Activated CD8-positive, alpha-beta T cell treated with anti-CD3 and anti-CD28 coated beads, Interleukin-2, amount 10 ng/mL, durations not matched to agents 7 days and 5 days (primary cell): ENCODE measurements at regions of chr3 and their contacts with region 1.

Region 1: GRCh38 chr3:18389108-18389733 is 35.9 kb downstream of the SATB1 start:
- DNase-seq: peak; percentile 39
- ATAC-seq: peak; percentile 21
- H3K4me3 Mint-ChIP-seq: no peak overlapping the region
- H3K27ac Mint-ChIP-seq: no peak overlapping the region
- H3K4me1 Mint-ChIP-seq: peaks cover 77% of the 10 kb centered on the region
- H3K27me3 Mint-ChIP-seq: no peaks in the 10 kb centered on the region

Region 2: GRCh38 chr3:18258492-18258891 is 130.7 kb before region 1 on chr3:
- CTCF ChIA-PET with region 1: no interaction called
- POLR2A ChIA-PET with region 1: no interaction called
- DNase-seq: no peak
- ATAC-seq: no peak
- H3K4me3 Mint-ChIP-seq: no peak overlapping the region
- H3K27ac Mint-ChIP-seq: no peak overlapping the region
- H3K4me1 Mint-ChIP-seq: no peaks in the 10 kb centered on the region
- H3K27me3 Mint-ChIP-seq: peaks cover 2% of the 10 kb centered on the region

Region 3: GRCh38 chr3:18369551-18370185 is 19.6 kb before region 1 on chr3:
- CTCF ChIA-PET with region 1: interaction called, 13 read pairs
- POLR2A ChIA-PET with region 1: no interaction called
- DNase-seq: no peak
- ATAC-seq: no peak
- H3K4me3 Mint-ChIP-seq: no peak overlapping the region
- H3K27ac Mint-ChIP-seq: peak overlapping the region; percentile 35
- H3K4me1 Mint-ChIP-seq: peaks cover 70% of the 10 kb centered on the region
- H3K27me3 Mint-ChIP-seq: no peaks in the 10 kb centered on the region

Region 4: DNA sequence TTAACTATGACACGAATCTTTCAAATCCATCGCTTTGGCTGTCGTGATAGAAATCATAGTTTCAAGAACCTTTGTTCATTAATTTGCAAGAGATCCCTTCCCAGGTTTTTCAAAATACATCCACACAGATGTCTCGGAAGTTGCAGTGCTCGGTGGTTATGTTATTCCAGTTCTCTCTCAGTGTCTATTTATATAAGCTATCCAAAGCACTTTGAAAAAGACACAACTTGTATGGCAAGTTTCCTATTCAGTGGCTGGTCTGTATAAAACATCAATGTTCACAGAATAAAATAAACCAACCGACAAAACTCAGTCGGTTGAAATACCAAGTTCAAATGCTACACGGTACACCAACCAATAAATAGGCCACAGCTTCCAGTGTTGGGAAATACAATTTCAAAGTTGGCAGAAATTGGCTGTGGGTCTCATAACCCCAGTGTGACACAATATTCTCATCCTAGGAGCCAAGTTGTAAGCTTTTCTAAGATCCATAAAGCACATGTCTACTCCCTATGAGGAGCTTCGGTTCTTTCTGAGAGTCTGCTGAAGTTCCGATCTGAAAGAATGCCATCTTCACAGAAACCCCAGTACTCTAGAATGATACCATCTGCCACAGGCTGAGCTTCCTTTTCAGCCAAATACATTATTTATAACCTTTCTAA is 12.2 kb after region 1 on chr3:
- CTCF ChIA-PET with region 1: interaction called, 36 read pairs
- POLR2A ChIA-PET with region 1: interaction called, 8 read pairs
- DNase-seq: no peak
- ATAC-seq: peak; percentile 37
- H3K4me3 Mint-ChIP-seq: peak overlapping the region; percentile 44
- H3K27ac Mint-ChIP-seq: peak overlapping the region; percentile 71
- H3K4me1 Mint-ChIP-seq: peaks cover 89% of the 10 kb centered on the region
- H3K27me3 Mint-ChIP-seq: no peaks in the 10 kb centered on the region

Region 5: GRCh38 chr3:18411541-18411940 is 22.3 kb after region 1 on chr3:
- CTCF ChIA-PET with region 1: interaction called, 32 read pairs
- POLR2A ChIA-PET with region 1: interaction called, 3 read pairs
- DNase-seq: no peak
- ATAC-seq: peak; percentile 44
- H3K4me3 Mint-ChIP-seq: peak overlapping the region; percentile 63
- H3K27ac Mint-ChIP-seq: peak overlapping the region; percentile 71
- H3K4me1 Mint-ChIP-seq: peaks cover 87% of the 10 kb centered on the region
- H3K27me3 Mint-ChIP-seq: no peaks in the 10 kb centered on the region